AG04450 (cell line): ENCODE measurements at regions of chr15 and their contacts with region 1.

Region 1: GRCh38 chr15:47473106-47473725 is 244.1 kb upstream of the SEMA6D start:
- DNase-seq: no peak
- H3K4me3 ChIP-seq: no peak overlapping the region
- H3K27ac ChIP-seq: no peak overlapping the region
- H3K27me3 ChIP-seq: no peaks in the 10 kb centered on the region
- CTCF ChIP-seq: no peak

Region 2: DNA sequence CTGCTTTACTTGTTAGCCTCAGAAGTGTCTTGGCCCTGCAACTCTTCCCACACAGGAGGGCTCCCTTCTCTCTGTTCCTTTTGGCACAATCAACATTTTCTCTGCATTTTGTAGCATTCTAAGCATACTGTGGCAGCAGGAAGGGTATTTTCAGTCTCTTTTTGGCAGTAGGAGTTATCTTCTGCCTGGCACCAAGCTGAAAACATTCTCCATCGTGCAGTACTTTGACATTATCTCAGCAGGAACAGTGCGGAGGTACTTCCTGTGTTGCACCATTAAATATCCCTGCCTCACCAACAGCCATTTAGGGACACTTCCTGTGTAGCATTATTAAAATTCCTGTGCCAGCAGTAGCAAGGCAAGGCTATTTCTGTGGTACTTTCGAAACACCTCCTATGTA is 10.8 kb after region 1 on chr15:
- CTCF ChIA-PET with region 1: interaction called, 12 read pairs
- POLR2A ChIA-PET with region 1: no interaction called
- DNase-seq: no peak
- H3K4me3 ChIP-seq: no peak overlapping the region
- H3K27ac ChIP-seq: no peak overlapping the region
- H3K27me3 ChIP-seq: no peaks in the 10 kb centered on the region
- CTCF ChIP-seq: no peak